ENCODE measurements at regions of chr17 and their contacts with region 1.

Region 1: DNA sequence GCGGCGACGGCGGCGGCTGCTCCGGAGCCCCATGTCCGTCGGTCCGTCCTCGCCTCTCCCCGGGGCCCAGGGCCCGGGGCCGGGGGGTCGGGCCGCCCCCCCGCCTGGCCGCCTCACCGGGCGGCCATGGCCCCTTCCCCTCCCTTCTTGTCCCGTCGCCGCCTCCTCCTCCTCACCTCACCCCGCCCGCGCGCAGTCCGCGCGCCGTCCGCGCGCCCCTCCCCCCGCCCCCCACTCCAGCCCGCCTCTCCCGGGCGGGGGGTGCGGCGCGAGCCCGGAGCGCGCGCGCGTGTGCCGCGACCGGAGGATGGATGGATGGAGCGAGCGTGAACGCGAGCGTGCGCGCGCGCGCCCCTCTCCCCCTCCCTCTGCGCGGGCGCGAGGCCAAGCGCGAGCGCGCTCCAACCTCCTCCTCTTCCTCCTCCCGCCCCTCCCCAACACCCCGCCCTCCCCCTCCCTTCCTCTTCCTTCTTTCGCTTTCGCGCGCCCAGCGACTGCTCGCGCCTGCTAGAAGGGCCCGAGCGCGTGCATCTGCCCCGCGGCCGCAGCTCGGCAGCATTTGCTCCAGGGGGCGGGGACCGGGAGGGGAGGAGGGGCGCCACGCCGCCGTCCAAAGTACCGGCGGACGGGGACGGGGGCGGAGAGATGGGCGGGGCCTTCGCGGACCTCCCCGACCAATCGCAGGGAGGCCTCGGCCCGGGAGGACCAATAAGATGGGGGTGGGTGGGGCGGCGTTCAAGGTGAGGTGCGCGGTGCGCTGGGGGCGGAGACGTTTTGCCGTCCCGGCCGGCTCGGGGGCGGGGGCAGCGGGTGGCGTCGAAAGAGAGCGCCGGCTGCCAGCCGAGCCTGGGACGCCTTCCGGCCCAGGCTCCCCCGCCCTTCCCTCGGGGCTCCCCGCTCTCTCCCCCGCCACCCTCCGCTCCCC is at the start of gene ATXN7L3:
- DNase-seq: peak; percentile 99
- H3K4me3 ChIP-seq: peak within 1 kb of the TSS; percentile 79 to 83
- H3K27ac ChIP-seq: peak within 1 kb of the TSS; percentile 85 to 96
- H3K4me1 ChIP-seq: peaks cover 16 to 30% of the 10 kb centered on the region in 2 experiments
- H3K27me3 ChIP-seq: no peaks in the 10 kb centered on the region
- CTCF ChIP-seq: no peak
- EP300 ChIP-seq: no peak
- RAD21 ChIP-seq: no peak
- polyA plus RNA-seq, gene ATXN7L3: 47.7 and 57.9 TPM in 2 replicates

Region 2: GRCh38 chr17:44053125-44053872 is 146.5 kb before region 1 on chr17:
- CTCF ChIA-PET with region 1: no interaction called
- POLR2A ChIA-PET with region 1: no interaction called
- DNase-seq: no peak
- H3K4me3 ChIP-seq: no peak overlapping the region
- H3K27ac ChIP-seq: no peak overlapping the region
- H3K4me1 ChIP-seq: no peaks in the 10 kb centered on the region
- H3K27me3 ChIP-seq: no peaks in the 10 kb centered on the region
- CTCF ChIP-seq: no peak
- EP300 ChIP-seq: no peak
- RAD21 ChIP-seq: no peak

Region 3: DNA sequence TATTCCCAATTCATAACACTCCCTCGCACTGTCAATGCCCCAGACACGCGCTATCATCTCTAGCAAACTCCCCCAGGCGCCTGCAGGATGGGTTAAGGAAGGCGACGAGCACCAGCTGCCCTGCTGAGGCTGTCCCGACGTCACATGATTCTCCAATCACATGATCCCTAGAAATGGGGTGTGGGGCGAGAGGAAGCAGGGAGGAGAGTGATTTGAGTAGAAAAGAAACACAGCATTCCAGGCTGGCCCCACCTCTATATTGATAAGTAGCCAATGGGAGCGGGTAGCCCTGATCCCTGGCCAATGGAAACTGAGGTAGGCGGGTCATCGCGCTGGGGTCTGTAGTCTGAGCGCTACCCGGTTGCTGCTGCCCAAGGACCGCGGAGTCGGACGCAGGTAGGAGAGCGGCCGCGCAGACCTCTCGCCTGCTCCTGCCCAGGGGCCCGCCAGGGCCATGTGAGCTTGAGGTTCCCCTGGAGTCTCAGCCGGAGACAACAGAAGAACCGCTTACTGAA is 145.2 kb after region 1 on chr17 and contains the start of gene GRN:
- CTCF ChIA-PET with region 1: interaction called, 15 read pairs
- POLR2A ChIA-PET with region 1: no interaction called
- DNase-seq: peak; percentile 97
- H3K4me3 ChIP-seq: peak within 1 kb of the TSS; percentile 83 to 98
- H3K27ac ChIP-seq: peak within 1 kb of the TSS; percentile 40 to 66; a peak in 3 of 4 replicates
- H3K4me1 ChIP-seq: peaks cover 0 to 13% of the 10 kb centered on the region in 2 experiments; a peak in 1 of 4 replicates
- H3K27me3 ChIP-seq: no peaks in the 10 kb centered on the region
- CTCF ChIP-seq: no peak
- EP300 ChIP-seq: peak; percentile 53 to 60; a peak in 2 of 4 replicates
- RAD21 ChIP-seq: no peak
- polyA plus RNA-seq, gene GRN: 360 and 442 TPM in 2 replicates

Region 4: DNA sequence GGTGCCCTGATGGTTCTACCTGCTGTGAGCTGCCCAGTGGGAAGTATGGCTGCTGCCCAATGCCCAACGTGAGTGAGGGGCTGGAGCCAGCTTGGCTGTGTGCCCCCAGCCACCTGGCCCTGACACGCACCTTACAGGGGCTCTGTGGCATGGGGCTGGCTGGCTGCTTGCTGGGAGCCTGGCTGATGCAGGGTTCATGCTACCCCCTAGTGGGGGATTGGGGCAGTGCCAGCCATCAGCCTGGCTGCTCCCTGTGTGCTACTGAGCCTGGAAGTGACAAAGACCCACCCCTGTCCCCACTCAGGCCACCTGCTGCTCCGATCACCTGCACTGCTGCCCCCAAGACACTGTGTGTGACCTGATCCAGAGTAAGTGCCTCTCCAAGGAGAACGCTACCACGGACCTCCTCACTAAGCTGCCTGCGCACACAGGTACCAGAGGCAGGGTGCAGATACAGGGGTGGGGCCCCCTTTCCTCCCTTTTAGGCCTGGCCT is 151.0 kb after region 1 on chr17:
- CTCF ChIA-PET with region 1: interaction called, 15 read pairs
- POLR2A ChIA-PET with region 1: no interaction called
- DNase-seq: peak; percentile 96
- H3K4me3 ChIP-seq: peak overlapping the region in 1 of 2 experiments; percentile 26; a peak in 1 of 4 replicates
- H3K27ac ChIP-seq: no peak overlapping the region
- H3K4me1 ChIP-seq: peaks cover 0 to 7% of the 10 kb centered on the region in 2 experiments; a peak in 1 of 4 replicates
- H3K27me3 ChIP-seq: no peaks in the 10 kb centered on the region
- CTCF ChIP-seq: peak; percentile 74
- EP300 ChIP-seq: no peak
- RAD21 ChIP-seq: peak; percentile 79

Measured in SK-N-SH (cell line).